ACHN (cell line): ENCODE measurements at regions of chr4 and their contacts with region 1.

Region 1: DNA sequence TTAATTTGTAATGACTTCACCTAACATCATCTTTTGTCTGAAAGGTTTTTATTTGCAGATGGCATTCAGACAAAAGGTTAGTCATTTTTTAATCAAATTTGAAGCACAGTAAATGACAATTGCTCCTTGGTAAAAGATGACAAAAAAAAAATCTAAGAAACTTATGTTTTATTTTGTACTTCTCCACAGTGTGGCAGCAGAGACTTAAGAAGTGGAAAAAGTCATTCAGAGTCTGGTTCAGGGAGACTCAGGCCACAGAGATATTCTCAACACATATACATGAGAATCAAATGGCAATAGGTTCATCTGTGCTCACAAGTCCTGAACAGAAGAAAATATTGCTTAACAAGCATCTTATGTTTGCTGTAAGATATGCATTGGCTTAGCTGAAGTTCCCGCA is 436.2 kb downstream of the KCNIP4 start:
- DNase-seq: peak; percentile 58

Region 2: GRCh38 chr4:21032089-21032645 is 480.2 kb before region 1 on chr4:
- in situ Hi-C with region 1: no loop called
- DNase-seq: no peak

Region 3: DNA sequence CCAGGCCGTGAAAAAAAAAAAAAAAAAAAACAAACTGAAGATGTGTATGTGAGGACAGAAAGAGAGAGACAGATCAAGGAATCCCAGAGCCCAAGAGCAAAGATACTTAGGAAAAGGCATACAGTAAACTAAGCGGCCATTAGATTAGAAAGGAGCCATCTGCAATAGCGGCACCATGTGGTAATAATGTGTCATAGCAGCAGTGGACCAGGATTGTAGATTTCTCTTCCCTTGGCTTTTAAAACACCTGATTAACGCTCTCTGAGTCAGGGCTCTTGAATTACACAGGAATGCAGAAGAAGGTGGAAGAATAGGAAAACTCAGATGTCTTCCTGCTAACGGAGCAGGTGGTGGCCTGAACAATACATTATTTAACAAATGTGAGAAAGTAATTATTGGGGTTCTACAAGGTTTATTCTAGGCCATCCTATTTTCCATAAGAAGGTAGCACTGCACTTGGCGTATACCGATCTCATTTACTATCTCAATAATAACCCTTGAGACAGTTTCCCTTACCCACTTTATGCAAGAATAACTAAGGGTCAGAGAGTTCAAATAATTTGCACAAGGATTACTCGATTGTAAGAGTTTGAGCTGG is 253.6 kb after region 1 on chr4:
- in situ Hi-C with region 1: loop called (anchors 25 kb)
- DNase-seq: peak; percentile 57